Head of caudate nucleus (tissue), 42 donors: ENCODE measurements at regions of chr19 and their contacts with region 1.

Region 1: GRCh38 chr19:47296036-47296435 is 13.6 kb upstream of the C5AR1 start:
- DNase-seq: peak; percentile 28 to 92 (median 72)

Region 2: GRCh38 chr19:47348819-47349795 is 53.1 kb after region 1 on chr19 and contains the start of gene DHX34:
- intact Hi-C with region 1: no loop called
- DNase-seq: peak; percentile 92 to 98 (median 96)

Region 3: GRCh38 chr19:47391510-47392223 is 95.6 kb after region 1 on chr19:
- intact Hi-C with region 1: loop called (anchors 5 kb)
- DNase-seq: peak; percentile 71 to 93 (median 83)